CD4-positive, alpha-beta memory T cell (primary cell): ENCODE measurements at regions of chr18 and their contacts with region 1.

Region 1: DNA sequence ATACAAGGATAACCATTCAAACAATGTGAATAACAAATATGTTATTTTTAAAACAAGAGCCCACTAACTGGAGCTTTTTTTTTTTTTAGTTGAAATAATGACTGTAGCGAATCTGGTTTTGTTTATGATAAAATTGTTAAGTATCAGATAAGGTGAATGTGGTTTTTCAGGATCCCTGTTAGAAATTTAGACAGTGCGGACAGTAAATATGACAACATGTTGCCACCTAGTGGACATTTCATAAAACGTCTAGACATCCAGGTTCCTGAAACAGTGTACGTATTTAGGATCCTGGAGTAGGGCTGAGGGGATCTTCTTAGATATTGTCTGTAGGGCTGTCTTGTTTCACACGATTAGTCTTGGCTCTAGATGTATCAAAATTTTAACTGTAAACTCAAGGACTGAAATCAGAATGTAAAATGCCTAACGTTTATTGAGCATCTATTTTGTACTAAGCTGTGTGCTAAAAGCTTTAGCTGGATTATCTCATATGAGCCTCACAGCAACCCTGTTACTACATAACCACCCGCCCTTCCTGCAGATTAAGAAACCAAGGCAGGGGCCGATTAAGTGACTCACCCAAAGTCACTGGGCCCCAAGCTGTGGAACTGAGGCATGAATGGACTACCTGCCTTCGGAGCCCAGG is 23.9 kb upstream of the CCDC68 start:
- DNase-seq: peak in 4 of 5 donors; percentile 31 to 42 (median 33)
- H3K4me3 ChIP-seq: no peak overlapping the region
- H3K4me3 Mint-ChIP-seq: no peak overlapping the region
- H3K27ac ChIP-seq: no peak overlapping the region
- H3K27ac Mint-ChIP-seq: no peak overlapping the region
- H3K4me1 ChIP-seq: no peaks in the 10 kb centered on the region
- H3K4me1 Mint-ChIP-seq: no peaks in the 10 kb centered on the region
- H3K27me3 ChIP-seq: no peaks in the 10 kb centered on the region
- H3K27me3 Mint-ChIP-seq: peaks cover 4 to 5% of the 10 kb centered on the region in 2 donors

Region 2: DNA sequence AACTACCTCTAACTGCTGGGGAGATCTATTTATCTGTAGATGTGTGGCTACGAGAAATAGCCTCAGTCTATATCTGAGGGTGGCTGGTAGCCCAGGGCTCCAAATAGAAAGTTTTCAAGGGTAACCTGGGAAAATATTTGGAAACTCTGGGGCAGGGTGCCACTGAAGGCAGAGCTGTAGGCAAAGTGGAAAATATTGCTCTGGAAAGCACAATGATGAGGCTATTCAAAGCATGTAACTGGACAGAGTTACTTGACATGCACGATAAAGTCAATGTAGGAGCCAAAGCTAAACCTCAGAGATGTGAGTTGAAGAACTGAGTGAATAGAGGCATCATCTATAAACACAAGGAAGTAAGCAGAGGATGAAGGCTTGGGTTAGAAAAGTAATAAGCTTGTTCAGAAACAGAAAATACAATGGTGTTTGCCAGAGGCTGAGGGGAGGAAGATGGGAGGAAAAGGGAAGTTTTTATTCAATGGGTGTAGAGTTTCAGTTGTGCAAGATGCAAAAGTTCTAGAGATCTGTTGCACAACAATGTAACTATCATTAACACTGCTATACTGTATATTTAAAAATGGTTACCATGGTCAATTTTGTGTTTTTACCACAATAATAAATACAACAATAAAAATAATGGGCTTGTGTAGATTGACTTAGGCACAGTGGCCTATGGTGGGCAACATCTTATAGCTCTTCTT is 930.3 kb before region 1 on chr18:
- CTCF ChIA-PET with region 1: no interaction called
- POLR2A ChIA-PET with region 1: no interaction called
- intact Hi-C with region 1: no loop called
- DNase-seq: no peak
- H3K4me3 ChIP-seq: no peak overlapping the region
- H3K4me3 Mint-ChIP-seq: no peak overlapping the region
- H3K27ac ChIP-seq: no peak overlapping the region
- H3K27ac Mint-ChIP-seq: no peak overlapping the region
- H3K4me1 ChIP-seq: no peaks in the 10 kb centered on the region
- H3K4me1 Mint-ChIP-seq: no peaks in the 10 kb centered on the region
- H3K27me3 ChIP-seq: no peaks in the 10 kb centered on the region
- H3K27me3 Mint-ChIP-seq: peaks cover 0 to 1% of the 10 kb centered on the region in 2 donors

Region 3: DNA sequence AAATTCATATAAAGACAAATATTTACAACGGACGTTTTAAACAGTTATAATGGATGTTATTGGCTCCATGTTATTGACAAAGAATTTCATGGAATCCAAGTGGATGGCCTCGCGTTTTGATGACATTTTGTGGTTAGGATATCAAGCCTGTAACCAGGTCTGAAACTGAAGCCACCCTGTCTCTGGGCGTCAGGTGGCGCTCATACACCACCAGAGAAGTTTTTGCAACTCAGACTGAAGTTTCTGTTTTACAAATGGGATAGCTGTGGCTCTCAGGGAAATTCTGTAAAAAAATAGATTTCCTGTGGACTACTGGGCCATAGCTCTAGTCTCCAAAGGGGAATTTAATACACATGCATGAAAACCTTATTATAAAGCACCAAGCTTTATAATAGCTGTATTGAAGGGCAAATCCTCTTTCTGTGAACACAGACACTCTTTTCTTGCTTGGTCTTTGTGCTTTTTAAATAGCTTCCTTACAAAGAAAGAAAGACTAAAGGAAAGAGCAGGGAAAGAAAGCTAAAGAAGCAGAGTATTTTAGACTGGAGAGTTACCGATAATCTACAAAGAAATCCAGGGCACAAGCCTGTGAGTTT is 538.7 kb before region 1 on chr18:
- CTCF ChIA-PET with region 1: interaction called, 12 read pairs
- POLR2A ChIA-PET with region 1: no interaction called
- intact Hi-C with region 1: loop called (anchors 1 kb)
- DNase-seq: no peak
- H3K4me3 ChIP-seq: no peak overlapping the region
- H3K4me3 Mint-ChIP-seq: no peak overlapping the region
- H3K27ac ChIP-seq: no peak overlapping the region
- H3K27ac Mint-ChIP-seq: no peak overlapping the region
- H3K4me1 ChIP-seq: no peaks in the 10 kb centered on the region
- H3K4me1 Mint-ChIP-seq: no peaks in the 10 kb centered on the region
- H3K27me3 ChIP-seq: no peaks in the 10 kb centered on the region
- H3K27me3 Mint-ChIP-seq: peaks cover 16 to 21% of the 10 kb centered on the region in 2 donors

Region 4: DNA sequence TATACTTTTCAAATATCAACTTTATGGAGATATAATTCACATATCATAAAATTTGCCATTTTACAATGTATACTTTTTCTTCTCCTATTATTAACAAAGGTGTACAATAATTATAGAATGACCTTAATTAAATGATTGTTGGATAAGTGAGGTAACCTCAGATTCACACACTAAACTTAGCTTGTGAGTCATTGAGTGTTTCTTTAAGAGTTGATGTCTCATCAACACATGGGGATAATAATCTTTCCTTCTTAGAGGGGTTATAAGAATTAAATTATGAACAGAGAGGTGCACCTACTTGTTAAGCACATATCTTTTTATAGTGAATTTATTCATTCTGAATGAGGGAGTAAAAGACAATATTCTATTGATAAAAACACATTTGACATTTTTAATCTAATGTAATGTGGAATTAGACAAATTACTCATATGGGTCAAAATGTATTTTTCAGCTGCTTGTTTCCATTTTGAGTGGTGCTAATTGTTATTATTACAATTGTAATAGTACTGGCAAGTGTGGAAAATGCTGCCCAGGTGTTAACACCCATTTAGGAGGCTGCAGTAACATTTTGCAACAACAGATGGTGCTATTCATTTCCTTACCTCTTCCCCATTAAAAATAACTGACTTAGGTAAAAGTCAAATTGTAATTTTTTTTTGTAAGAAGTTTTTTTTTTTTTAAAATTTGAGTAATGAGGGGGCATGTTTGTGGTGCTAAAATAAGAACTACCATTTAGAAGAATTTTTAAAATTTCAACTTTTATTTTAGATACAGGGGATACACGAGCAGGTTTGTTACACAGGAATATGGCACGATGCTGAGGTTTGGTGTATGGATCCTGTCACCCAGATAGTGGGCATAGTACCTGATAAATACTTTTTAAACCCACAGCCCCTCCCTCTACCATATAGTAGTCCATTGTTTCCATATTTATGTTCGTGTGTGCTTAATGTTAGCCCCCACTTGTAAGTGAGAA is 424.3 kb before region 1 on chr18:
- CTCF ChIA-PET with region 1: interaction called, 4 read pairs
- POLR2A ChIA-PET with region 1: no interaction called
- intact Hi-C with region 1: loop called (anchors 1 kb)
- DNase-seq: peak in 2 of 5 donors; percentile 10 to 16
- H3K4me3 ChIP-seq: no peak overlapping the region
- H3K4me3 Mint-ChIP-seq: no peak overlapping the region
- H3K27ac ChIP-seq: no peak overlapping the region
- H3K27ac Mint-ChIP-seq: no peak overlapping the region
- H3K4me1 ChIP-seq: no peaks in the 10 kb centered on the region
- H3K4me1 Mint-ChIP-seq: no peaks in the 10 kb centered on the region
- H3K27me3 ChIP-seq: no peaks in the 10 kb centered on the region
- H3K27me3 Mint-ChIP-seq: peaks cover 0 to 2% of the 10 kb centered on the region in 2 donors

Region 5: DNA sequence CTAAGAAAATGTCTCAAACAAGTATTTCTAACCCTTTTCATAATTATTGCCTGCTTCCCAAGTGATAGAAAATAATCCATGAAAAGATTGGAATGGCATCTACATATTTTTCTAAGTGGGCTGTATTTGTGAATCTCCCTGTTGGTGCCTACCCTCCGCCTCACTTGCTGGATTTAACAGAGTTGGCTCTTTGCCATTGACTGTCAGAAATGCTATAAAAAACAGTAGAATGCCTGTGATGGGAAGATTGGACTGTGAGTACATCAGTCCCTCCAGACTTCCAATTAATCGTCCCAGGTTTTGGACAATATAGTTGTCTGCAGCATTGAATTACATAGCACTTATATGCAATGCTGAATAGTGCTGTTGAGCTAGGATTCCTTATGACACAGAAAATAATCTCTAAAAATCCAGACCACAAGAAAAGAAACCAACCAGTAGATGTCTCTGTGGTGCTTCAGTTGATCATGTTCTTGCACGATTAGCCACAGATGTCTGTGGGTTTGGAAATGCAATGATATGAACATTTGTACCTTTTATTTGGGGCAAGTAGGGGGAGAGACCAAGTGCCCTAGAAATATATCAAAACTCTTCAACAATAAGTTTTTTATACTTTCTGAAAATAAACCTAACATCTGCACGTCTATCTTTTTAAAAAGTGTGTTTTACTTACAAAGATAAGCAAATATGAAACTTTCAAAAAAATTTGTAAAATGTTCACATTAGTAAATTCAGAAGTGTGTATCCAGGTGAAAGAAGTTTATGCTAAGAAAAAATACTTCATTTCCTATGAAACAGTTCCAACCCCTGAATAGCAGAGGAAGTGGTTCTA is 303.6 kb before region 1 on chr18:
- CTCF ChIA-PET with region 1: interaction called, 16 read pairs
- POLR2A ChIA-PET with region 1: no interaction called
- intact Hi-C with region 1: loop called (anchors 1 kb)
- DNase-seq: peak in 4 of 5 donors; percentile 19 to 37 (median 34)
- H3K4me3 ChIP-seq: no peak overlapping the region
- H3K4me3 Mint-ChIP-seq: no peak overlapping the region
- H3K27ac ChIP-seq: no peak overlapping the region
- H3K27ac Mint-ChIP-seq: no peak overlapping the region
- H3K4me1 ChIP-seq: no peaks in the 10 kb centered on the region
- H3K4me1 Mint-ChIP-seq: peaks cover 0 to 1% (median 0%) of the 10 kb centered on the region in 4 donors
- H3K27me3 ChIP-seq: no peaks in the 10 kb centered on the region
- H3K27me3 Mint-ChIP-seq: no peaks in the 10 kb centered on the region